GM12878 (cell line): ENCODE measurements at regions of chr20 and their contacts with region 1.

Region 1: DNA sequence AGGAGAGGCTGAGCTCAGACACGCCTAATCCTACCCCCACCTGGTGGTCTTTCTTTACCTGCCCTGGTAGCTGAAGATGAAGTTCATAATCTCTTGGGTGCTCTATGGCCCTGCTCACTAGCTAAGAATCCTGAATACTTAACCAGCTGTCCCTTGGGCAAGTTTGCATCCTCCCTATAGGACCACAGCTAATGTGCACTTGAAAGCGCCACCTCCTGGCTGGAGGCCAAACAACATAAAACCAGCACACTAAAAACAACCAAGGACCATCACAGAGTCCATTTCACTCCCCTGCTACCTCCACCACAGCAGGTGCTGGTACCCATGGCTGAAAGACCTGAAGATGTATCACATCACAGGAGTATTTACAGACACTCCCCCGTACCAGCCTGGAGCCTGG is 155.5 kb upstream of the SLC24A3 start:
- DNase-seq: no peak
- ATAC-seq: no peak
- H3K4me3 ChIP-seq: no peak overlapping the region
- H3K27ac ChIP-seq: no peak overlapping the region
- H3K4me1 ChIP-seq: no peaks in the 10 kb centered on the region
- H3K27me3 ChIP-seq: no peaks in the 10 kb centered on the region
- CTCF ChIP-seq: peak in 2 of 3 experiments; percentile 13 to 31; a peak in 2 of 6 replicates
- EP300 ChIP-seq: no peak
- POLR2A ChIP-seq: no peak
- RAD21 ChIP-seq: 0 out of 2 replicates have a peak, but pooled peaks have one; percentile 25

Region 2: DNA sequence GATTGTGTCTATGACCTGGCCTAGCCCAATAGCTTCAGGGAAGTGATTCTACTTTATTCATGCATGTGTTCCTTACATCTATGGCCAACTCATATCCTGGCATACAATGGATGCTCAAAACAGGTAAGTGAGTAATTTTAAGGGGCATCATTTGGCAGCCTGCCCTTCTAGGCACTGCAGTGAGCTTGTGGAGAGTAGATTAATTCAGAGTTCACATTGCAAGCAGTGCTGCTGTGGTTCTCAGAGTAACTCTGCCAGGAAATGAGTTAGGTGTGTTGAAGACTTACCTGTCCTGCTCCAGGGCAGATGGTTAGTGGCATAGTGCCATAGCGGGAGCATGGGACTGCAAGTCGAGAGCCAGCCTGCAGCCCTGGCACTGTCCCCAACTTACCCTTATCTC is 85.3 kb before region 1 on chr20:
- CTCF ChIA-PET with region 1: no interaction called
- POLR2A ChIA-PET with region 1: no interaction called
- RAD21 ChIA-PET with region 1: no interaction called
- SMC1A ChIA-PET with region 1: no interaction called
- in situ Hi-C with region 1: no loop called
- intact Hi-C with region 1: no loop called
- DNase-seq: no peak
- ATAC-seq: no peak
- H3K4me3 ChIP-seq: no peak overlapping the region
- H3K27ac ChIP-seq: no peak overlapping the region
- H3K4me1 ChIP-seq: no peaks in the 10 kb centered on the region
- H3K27me3 ChIP-seq: no peaks in the 10 kb centered on the region
- CTCF ChIP-seq: no peak
- EP300 ChIP-seq: no peak
- POLR2A ChIP-seq: no peak
- RAD21 ChIP-seq: no peak

Region 3: GRCh38 chr20:19067986-19068385 is 11.1 kb after region 1 on chr20:
- CTCF ChIA-PET with region 1: interaction called, 12 read pairs
- POLR2A ChIA-PET with region 1: no interaction called
- RAD21 ChIA-PET with region 1: interaction called, 3 read pairs
- SMC1A ChIA-PET with region 1: interaction called, 11 read pairs
- in situ Hi-C with region 1: no loop called
- intact Hi-C with region 1: no loop called
- DNase-seq: no peak
- ATAC-seq: no peak
- H3K4me3 ChIP-seq: no peak overlapping the region
- H3K27ac ChIP-seq: no peak overlapping the region
- H3K4me1 ChIP-seq: peaks cover 21% of the 10 kb centered on the region
- H3K27me3 ChIP-seq: no peaks in the 10 kb centered on the region
- CTCF ChIP-seq: no peak
- EP300 ChIP-seq: no peak
- POLR2A ChIP-seq: no peak
- RAD21 ChIP-seq: no peak